Right ventricle myocardium superior (tissue), 1 donor: ENCODE measurements at regions of chr6 and their contacts with region 1.

Region 1: GRCh38 chr6:75208298-75209183 is 2.7 kb upstream of the COL12A1 start:
- DNase-seq: peak; percentile 90
- ATAC-seq: peak; percentile 76

Region 2: DNA sequence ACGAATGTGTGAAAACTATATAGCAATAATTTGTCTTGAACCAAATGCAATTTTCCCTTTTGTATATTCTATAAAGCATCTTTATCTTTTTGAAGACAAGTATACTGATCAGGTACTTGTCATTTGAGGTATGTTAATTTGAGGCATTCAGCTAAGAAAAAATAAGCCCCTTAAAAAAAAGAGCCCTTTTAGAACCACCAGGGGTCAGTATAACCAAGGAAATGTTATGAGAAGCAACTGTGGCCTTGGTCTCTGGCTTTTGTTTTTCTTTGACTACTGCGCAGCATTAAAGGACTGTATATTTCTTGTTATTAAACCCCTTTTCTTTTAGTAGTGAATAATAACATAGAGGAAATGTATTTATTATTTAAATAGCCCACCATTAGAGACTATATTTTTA is 1469.4 kb before region 1 on chr6:
- intact Hi-C with region 1: loop called (anchors 2 kb)
- DNase-seq: no peak
- ATAC-seq: peak; percentile 73

Region 3: GRCh38 chr6:73969971-73970970 is 1238.3 kb before region 1 on chr6:
- intact Hi-C with region 1: loop called (anchors 5 kb)
- DNase-seq: no peak
- ATAC-seq: peak; percentile 61

Region 4: GRCh38 chr6:75117701-75118100 is 90.8 kb before region 1 on chr6:
- intact Hi-C with region 1: no loop called
- DNase-seq: no peak
- ATAC-seq: no peak

Region 5: GRCh38 chr6:75262716-75263400 is 54.3 kb after region 1 on chr6:
- intact Hi-C with region 1: no loop called
- DNase-seq: no peak
- ATAC-seq: no peak

Region 6: DNA sequence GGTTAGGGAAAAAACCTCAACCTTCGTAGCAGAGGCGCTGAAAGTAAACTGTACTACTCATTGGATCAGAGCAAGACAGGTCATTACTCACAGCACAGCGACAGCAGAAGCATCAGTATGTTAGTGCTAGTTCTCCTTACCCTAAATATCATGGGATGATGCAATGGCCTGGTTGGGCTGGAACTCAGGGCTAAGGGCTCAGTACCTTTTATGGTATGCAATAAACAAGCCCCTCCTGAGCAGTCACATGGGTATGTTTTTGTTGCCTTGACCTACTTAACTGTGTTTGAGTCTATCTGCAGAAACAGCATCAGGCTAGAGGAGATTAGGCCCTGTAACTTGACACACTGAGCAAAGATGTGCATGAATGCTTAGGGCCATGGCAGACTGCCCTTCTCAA is 1233.3 kb after region 1 on chr6:
- intact Hi-C with region 1: no loop called
- DNase-seq: no peak
- ATAC-seq: no peak